ENCODE measurements at regions of chr4 and their contacts with region 1.

Region 1: GRCh38 chr4:24488399-24489164 is 95.8 kb downstream of the DHX15 start:
- H3K4me3 Mint-ChIP-seq: no peak overlapping the region
- H3K27ac Mint-ChIP-seq: no peak overlapping the region
- H3K4me1 Mint-ChIP-seq: no peaks in the 10 kb centered on the region
- H3K27me3 Mint-ChIP-seq: peaks cover 10% of the 10 kb centered on the region

Region 2: DNA sequence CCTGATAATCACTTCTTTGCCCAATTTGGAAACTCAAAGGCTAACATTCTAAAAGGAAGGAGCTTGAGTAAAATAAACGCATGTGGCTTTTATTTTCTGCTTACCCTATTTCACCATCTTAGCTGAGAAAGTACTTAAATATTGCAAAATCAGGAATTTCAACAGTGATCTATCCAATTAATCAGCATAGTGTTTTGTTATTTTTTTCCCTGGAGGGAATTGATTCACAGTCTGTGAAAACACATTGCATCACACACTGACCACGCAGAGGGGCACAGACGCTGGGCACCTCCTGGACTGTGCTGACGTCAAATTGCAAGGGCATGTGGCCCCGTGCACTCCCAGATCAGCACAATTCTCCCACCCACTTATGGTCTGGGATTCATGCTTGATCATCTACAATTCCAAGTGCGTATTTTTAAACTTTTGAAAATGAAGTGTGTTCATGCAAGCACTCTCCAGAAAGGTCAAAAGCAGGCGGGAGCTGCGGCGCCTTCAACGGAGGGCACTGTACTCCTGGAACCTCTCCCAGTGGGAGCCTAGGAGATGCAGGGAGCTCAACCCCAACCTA is 278.2 kb before region 1 on chr4:
- intact Hi-C with region 1: no loop called
- H3K4me3 Mint-ChIP-seq: no peak overlapping the region
- H3K27ac Mint-ChIP-seq: no peak overlapping the region
- H3K4me1 Mint-ChIP-seq: no peaks in the 10 kb centered on the region
- H3K27me3 Mint-ChIP-seq: no peaks in the 10 kb centered on the region

Region 3: DNA sequence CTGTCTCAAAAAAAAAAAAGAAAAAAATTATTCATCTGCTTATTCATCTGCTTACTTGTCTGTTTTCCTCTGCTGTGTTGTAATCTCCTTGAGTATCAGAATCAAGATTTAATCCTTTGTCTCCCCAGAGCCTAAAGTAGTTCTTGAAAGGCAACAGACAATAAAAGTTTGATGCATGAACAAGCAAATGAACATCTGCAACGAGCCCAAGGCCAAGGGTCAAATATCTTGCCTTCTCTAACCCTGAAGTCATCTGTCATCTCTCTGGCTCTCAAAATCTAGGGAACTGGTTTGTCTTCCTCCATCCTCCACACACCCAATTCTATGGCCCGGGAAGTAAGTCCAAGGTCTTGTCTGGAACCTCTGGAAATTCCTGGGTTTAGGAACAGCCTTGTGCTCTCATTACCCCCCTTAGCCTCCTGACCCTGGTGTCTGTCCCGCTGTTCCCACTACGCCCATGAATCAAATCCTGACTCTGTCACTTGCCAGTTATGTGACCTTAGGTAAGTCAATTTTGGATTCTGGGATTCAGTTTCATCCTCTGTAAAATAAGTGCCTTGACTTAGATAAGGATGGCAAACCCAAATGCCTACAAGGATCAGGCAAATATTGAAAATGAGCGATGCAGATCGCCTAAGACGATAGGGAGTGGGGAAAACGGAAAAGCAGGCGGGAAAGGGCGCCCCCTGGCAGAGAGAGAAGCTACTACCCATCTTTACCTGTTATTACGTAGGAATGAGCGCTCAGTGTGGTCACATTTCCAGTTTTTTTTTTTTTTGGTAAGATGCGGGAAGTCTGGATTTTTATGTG is 198.5 kb after region 1 on chr4:
- intact Hi-C with region 1: loop called (anchors 1 kb)
- H3K4me3 Mint-ChIP-seq: no peak overlapping the region
- H3K27ac Mint-ChIP-seq: no peak overlapping the region
- H3K4me1 Mint-ChIP-seq: peaks cover 7% of the 10 kb centered on the region
- H3K27me3 Mint-ChIP-seq: peaks cover 14% of the 10 kb centered on the region

Region 4: DNA sequence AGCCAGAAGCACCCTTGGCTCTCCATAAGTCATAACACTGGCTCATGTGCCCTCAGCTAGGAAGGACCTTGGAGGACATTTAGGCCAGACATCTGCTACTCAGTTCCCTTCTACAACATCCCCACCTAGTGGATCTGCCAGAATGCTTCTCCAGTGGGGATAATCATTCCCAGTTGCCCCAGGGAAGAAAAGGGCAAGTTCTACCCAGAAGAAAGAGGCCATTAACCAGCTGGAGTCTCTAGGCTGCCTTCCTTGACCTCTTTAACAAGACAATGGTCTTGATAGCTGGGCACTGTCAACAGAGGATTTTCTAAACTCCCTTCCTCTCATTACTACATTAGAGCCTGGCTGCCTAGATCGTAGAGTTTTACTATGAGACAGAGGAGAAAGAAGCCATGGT is 500.2 kb after region 1 on chr4:
- intact Hi-C with region 1: loop called (anchors 1 kb)
- H3K4me3 Mint-ChIP-seq: no peak overlapping the region
- H3K27ac Mint-ChIP-seq: no peak overlapping the region
- H3K4me1 Mint-ChIP-seq: no peaks in the 10 kb centered on the region
- H3K27me3 Mint-ChIP-seq: peaks cover 8% of the 10 kb centered on the region

Region 5: DNA sequence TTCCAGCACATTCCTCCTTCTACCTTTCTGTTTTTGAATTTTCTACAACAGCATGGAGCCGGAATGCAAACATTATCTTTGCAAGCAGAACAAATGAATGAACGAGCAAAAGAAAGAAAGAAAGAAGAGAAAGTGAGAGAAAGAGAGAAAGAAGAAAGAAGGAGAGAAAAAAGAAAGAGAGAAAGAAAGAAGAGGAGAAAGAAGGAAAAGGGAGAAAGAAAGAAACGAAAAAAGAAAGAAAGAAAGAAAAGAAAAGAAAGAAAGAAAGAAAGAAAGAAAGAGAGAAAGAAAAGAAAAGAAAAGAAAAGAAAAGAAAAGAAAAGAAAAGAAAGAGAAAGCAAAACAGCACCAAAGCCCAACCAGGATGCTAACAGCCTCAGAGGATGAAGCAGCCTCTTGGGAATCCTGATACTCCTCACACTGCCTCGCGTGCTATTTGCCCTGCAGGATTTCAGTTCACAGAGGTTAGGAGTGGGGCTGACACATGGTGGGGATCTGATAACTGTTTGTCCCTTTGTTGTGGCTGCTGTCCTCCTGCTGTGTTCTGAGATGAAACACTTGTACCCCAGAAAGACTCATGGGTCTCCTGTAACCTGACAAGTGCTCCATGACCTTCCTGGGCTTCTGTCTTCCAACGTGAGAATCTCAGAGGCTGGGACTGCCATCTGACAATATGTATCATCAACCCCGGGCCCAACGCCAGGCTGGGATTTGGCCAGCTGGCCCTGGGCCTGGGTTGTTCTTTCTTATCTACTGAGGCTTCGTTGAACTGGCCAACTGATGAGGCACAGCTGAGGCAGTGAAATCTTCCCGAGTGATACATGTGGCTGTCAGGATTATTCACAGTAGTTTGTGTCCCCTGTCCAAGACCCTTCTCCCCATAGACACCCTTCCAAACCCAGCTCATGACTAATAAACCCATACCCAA is 610.6 kb after region 1 on chr4:
- intact Hi-C with region 1: no loop called
- H3K4me3 Mint-ChIP-seq: no peak overlapping the region
- H3K27ac Mint-ChIP-seq: no peak overlapping the region
- H3K4me1 Mint-ChIP-seq: no peaks in the 10 kb centered on the region
- H3K27me3 Mint-ChIP-seq: peaks cover 1% of the 10 kb centered on the region

Region 6: GRCh38 chr4:25144870-25145481 is 656.4 kb after region 1 on chr4:
- intact Hi-C with region 1: loop called (anchors 10 kb)
- H3K4me3 Mint-ChIP-seq: no peak overlapping the region
- H3K27ac Mint-ChIP-seq: no peak overlapping the region
- H3K4me1 Mint-ChIP-seq: peaks cover 16% of the 10 kb centered on the region
- H3K27me3 Mint-ChIP-seq: no peaks in the 10 kb centered on the region